Naive thymus-derived CD4-positive, alpha-beta T cell (primary cell): ENCODE measurements at regions of chr18 and their contacts with region 1.

Region 1: GRCh38 chr18:63161761-63162195 is 157.8 kb downstream of the BCL2 start:
- DNase-seq: peak; percentile 39 to 94 (median 75)
- ATAC-seq: peak; percentile 90
- H3K4me3 ChIP-seq: peak overlapping the region; percentile 40
- H3K4me3 Mint-ChIP-seq: peak overlapping the region; percentile 74 to 99 (median 86)
- H3K27ac ChIP-seq: peak overlapping the region; percentile 90
- H3K27ac Mint-ChIP-seq: peak overlapping the region; percentile 93 to 99 (median 95)
- H3K4me1 ChIP-seq: peaks cover 63 to 69% of the 10 kb centered on the region in 2 donors
- H3K4me1 Mint-ChIP-seq: peaks cover 70 to 98% (median 94%) of the 10 kb centered on the region in 7 donors
- H3K27me3 ChIP-seq: no peaks in the 10 kb centered on the region
- H3K27me3 Mint-ChIP-seq: no peaks in the 10 kb centered on the region

Region 2: GRCh38 chr18:62522504-62523254 is 639.1 kb before region 1 on chr18 and contains the start of gene ZCCHC2:
- CTCF ChIA-PET with region 1: no interaction called
- POLR2A ChIA-PET with region 1: no interaction called
- intact Hi-C with region 1: loop called (anchors 2 to 10 kb)
- DNase-seq: peak; percentile 96 to 100 (median 99)
- ATAC-seq: peak; percentile 88
- H3K4me3 ChIP-seq: peak within 1 kb of the TSS; percentile 81
- H3K4me3 Mint-ChIP-seq: peak within 1 kb of the TSS; percentile 91 to 98 (median 96)
- H3K27ac ChIP-seq: peak within 1 kb of the TSS; percentile 88
- H3K27ac Mint-ChIP-seq: peak within 1 kb of the TSS; percentile 62 to 97 (median 93)
- H3K4me1 ChIP-seq: peaks cover 23 to 26% of the 10 kb centered on the region in 2 donors
- H3K4me1 Mint-ChIP-seq: peaks cover 21 to 44% (median 37%) of the 10 kb centered on the region in 7 donors
- H3K27me3 ChIP-seq: no peaks in the 10 kb centered on the region
- H3K27me3 Mint-ChIP-seq: no peaks in the 10 kb centered on the region
- total RNA-seq, gene ZCCHC2: 51.1 to 68.5 (median 63.1) TPM

Region 3: GRCh38 chr18:63175264-63175663 is 13.5 kb after region 1 on chr18:
- CTCF ChIA-PET with region 1: interaction called, 7 read pairs
- POLR2A ChIA-PET with region 1: interaction called, 37 read pairs
- intact Hi-C with region 1: loop called in 1 of 2 experiments (anchors 1 kb)
- DNase-seq: no peak
- ATAC-seq: peak; percentile 37
- H3K4me3 ChIP-seq: no peak overlapping the region
- H3K4me3 Mint-ChIP-seq: peak overlapping the region in 1 of 10 donors; percentile 23
- H3K27ac ChIP-seq: peak overlapping the region; percentile 19
- H3K27ac Mint-ChIP-seq: peak overlapping the region in 8 of 9 donors; percentile 7 to 89 (median 63)
- H3K4me1 ChIP-seq: peaks cover 0 to 7% of the 10 kb centered on the region in 2 donors
- H3K4me1 Mint-ChIP-seq: peaks cover 31 to 77% (median 66%) of the 10 kb centered on the region in 7 donors
- H3K27me3 ChIP-seq: no peaks in the 10 kb centered on the region
- H3K27me3 Mint-ChIP-seq: no peaks in the 10 kb centered on the region

Region 4: DNA sequence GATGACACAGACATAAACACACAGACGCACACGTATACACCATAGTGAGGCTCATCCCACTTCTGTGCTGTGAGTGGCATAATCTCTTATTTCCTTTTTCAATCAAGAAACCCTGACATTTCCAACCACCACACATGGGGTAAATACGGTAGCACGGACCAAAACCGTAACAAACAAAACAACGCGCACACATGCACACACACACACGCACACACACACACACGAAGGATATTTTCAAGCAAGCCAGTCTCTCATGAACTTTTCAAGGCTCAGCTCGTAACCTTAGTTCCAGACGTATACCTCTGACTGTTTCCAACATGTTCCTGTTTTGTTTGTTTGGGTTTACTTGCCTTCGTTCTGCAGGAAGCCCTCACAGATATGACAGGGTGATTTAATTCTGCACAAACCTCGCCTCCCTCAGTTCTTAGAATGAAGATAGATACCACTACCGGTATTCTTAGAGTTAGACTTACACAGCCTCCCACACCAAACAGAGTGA is 38.0 kb after region 1 on chr18:
- CTCF ChIA-PET with region 1: interaction called, 4 read pairs
- POLR2A ChIA-PET with region 1: interaction called, 38 read pairs
- intact Hi-C with region 1: loop called (anchors 1 kb)
- DNase-seq: peak in 7 of 9 donors; percentile 57 to 82 (median 74)
- ATAC-seq: peak; percentile 84
- H3K4me3 ChIP-seq: peak overlapping the region; percentile 63
- H3K4me3 Mint-ChIP-seq: no peak overlapping the region
- H3K27ac ChIP-seq: peak overlapping the region; percentile 73
- H3K27ac Mint-ChIP-seq: no peak overlapping the region
- H3K4me1 ChIP-seq: peaks cover 37 to 71% of the 10 kb centered on the region in 2 donors
- H3K4me1 Mint-ChIP-seq: peaks cover 19 to 49% (median 33%) of the 10 kb centered on the region in 7 donors
- H3K27me3 ChIP-seq: no peaks in the 10 kb centered on the region
- H3K27me3 Mint-ChIP-seq: no peaks in the 10 kb centered on the region

Region 5: DNA sequence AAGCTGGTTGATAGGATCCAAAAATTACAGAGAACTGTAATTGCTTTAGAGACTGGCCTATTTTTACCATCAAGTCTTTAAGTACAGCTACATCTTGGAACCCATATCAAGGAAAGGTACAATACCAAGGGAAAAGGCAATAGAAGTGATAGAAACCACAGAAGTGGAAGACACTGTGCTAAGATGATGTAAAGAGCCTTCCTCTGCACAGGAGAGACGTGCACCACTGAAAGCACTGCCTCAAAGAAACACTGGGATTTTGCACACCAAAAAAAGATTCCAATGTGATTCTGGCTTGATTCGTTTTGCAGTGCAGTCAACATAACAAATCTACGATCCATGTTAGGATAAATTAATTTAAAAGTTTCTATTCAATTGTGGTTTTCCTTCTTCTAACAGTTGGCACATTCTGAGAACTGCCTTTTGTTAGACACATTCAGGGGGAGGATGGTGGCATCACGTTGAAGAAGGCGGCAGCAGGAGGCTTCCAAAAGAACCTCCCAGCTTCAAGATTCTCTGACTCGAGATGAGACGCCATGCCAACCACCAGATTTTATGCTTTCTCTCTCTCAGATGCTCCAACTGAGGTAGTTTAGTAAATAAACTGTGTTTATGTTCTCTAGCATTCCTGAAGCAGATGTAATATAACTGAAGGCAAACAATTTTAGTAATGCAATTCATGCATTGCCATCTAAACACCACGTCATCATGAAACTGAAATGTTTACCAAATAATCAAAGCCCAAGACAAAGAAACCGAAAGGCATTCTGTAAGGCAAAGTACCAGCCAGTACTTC is 54.9 kb after region 1 on chr18:
- CTCF ChIA-PET with region 1: no interaction called
- POLR2A ChIA-PET with region 1: interaction called, 9 read pairs
- intact Hi-C with region 1: loop called (anchors 1 kb)
- DNase-seq: peak in 7 of 9 donors; percentile 34 to 62 (median 49)
- ATAC-seq: peak; percentile 73
- H3K4me3 ChIP-seq: peak overlapping the region; percentile 25
- H3K4me3 Mint-ChIP-seq: peak overlapping the region; percentile 54 to 89 (median 78)
- H3K27ac ChIP-seq: peak overlapping the region; percentile 63
- H3K27ac Mint-ChIP-seq: peak overlapping the region; percentile 70 to 94 (median 90)
- H3K4me1 ChIP-seq: peaks cover 58 to 75% of the 10 kb centered on the region in 2 donors
- H3K4me1 Mint-ChIP-seq: peaks cover 71 to 99% (median 93%) of the 10 kb centered on the region in 7 donors
- H3K27me3 ChIP-seq: no peaks in the 10 kb centered on the region
- H3K27me3 Mint-ChIP-seq: no peaks in the 10 kb centered on the region

Region 6: GRCh38 chr18:63367053-63367953 is 205.5 kb after region 1 on chr18 and contains the start of gene KDSR:
- CTCF ChIA-PET with region 1: no interaction called
- POLR2A ChIA-PET with region 1: interaction called, 4 read pairs
- intact Hi-C with region 1: loop called in 1 of 2 experiments (anchors 2 kb)
- DNase-seq: peak; percentile 71 to 90 (median 79)
- ATAC-seq: peak; percentile 92
- H3K4me3 ChIP-seq: peak within 1 kb of the TSS; percentile 92
- H3K4me3 Mint-ChIP-seq: peak within 1 kb of the TSS; percentile 85 to 99 (median 94)
- H3K27ac ChIP-seq: peak within 1 kb of the TSS; percentile 77
- H3K27ac Mint-ChIP-seq: peak within 1 kb of the TSS; percentile 84 to 92 (median 89)
- H3K4me1 ChIP-seq: peaks cover 6 to 29% of the 10 kb centered on the region in 2 donors
- H3K4me1 Mint-ChIP-seq: peaks cover 32 to 56% (median 41%) of the 10 kb centered on the region in 7 donors
- H3K27me3 ChIP-seq: no peaks in the 10 kb centered on the region
- H3K27me3 Mint-ChIP-seq: no peaks in the 10 kb centered on the region
- total RNA-seq, gene KDSR: 24.4 to 57.9 (median 46.9) TPM